Activated T-helper 1 cell treated with anti-CD3 and anti-CD28 coated beads, Interleukin-12 subunit alpha, Interleukin-12 subunit beta, Interleukin-2, Interleukin-4 antibody, amounts not matched to agents 30 ng/mL and 10 ng/mL and 1 ng/mL, durations not matched to agents 14 hours and 24 hours and 36 hours (primary cell): ENCODE measurements at regions of chr6 and their contacts with region 1.

Region 1: DNA sequence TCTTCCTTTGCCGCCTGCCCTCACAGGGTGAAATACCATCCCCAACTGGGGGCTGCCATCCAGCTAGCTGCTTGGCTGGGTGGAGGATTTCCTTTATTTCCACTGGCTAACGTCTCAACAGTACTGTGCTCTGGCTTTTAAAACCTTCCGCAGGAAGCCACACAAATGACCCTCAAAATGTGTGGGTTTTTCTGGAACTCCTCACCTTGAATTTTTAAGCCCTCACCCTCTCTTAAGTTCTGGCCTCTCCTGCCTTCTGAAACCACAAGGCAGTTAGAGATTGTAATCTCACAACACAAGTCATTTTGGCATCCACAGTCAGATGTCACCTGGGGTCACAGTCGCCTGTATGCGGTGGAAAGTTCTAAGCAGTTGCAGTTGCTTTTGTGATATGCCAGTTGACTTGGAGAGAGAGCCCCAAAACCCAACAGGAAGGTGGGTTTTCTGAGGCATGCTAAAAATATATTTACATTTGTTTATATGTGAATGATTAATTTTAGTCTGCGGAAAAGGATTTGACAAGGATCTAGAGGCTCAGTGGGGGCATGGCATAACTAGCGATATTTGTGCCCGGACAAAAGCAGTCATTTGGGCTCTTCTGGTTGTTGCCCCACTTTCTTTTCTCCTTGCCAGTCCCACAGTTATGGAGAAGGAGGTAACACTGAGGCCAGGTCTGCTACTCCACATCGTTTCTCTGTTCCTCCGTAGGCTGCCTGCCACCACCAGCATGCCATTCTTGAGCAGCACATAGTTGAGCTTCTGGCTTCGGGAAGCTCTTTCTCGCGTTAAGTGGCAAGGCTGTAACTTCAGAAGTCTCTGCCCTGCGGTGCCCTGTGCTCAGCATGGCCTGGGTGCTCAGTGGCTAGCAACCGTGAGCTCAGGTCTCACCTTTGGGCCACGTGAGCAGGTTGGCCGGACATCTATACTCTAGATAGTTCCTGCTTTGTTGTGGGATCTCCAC is 335.3 kb downstream of the CD83 start:
- DNase-seq: peak; percentile 62
- H3K4me3 Mint-ChIP-seq: peak overlapping the region; percentile 58
- H3K27ac Mint-ChIP-seq: peak overlapping the region; percentile 91
- H3K4me1 Mint-ChIP-seq: peaks cover 88% of the 10 kb centered on the region
- H3K27me3 Mint-ChIP-seq: peaks cover 2% of the 10 kb centered on the region

Region 2: GRCh38 chr6:14381829-14382677 is 70.8 kb before region 1 on chr6:
- intact Hi-C with region 1: loop called (anchors 2 kb)
- DNase-seq: peak; percentile 1
- H3K4me3 Mint-ChIP-seq: no peak overlapping the region
- H3K27ac Mint-ChIP-seq: no peak overlapping the region
- H3K4me1 Mint-ChIP-seq: peaks cover 39% of the 10 kb centered on the region
- H3K27me3 Mint-ChIP-seq: peaks cover 2% of the 10 kb centered on the region

Region 3: GRCh38 chr6:14638906-14639761 is 186.3 kb after region 1 on chr6:
- intact Hi-C with region 1: loop called (anchors 10 kb)
- DNase-seq: no peak
- H3K4me3 Mint-ChIP-seq: no peak overlapping the region
- H3K27ac Mint-ChIP-seq: no peak overlapping the region
- H3K4me1 Mint-ChIP-seq: peaks cover 70% of the 10 kb centered on the region
- H3K27me3 Mint-ChIP-seq: peaks cover 8% of the 10 kb centered on the region

Region 4: DNA sequence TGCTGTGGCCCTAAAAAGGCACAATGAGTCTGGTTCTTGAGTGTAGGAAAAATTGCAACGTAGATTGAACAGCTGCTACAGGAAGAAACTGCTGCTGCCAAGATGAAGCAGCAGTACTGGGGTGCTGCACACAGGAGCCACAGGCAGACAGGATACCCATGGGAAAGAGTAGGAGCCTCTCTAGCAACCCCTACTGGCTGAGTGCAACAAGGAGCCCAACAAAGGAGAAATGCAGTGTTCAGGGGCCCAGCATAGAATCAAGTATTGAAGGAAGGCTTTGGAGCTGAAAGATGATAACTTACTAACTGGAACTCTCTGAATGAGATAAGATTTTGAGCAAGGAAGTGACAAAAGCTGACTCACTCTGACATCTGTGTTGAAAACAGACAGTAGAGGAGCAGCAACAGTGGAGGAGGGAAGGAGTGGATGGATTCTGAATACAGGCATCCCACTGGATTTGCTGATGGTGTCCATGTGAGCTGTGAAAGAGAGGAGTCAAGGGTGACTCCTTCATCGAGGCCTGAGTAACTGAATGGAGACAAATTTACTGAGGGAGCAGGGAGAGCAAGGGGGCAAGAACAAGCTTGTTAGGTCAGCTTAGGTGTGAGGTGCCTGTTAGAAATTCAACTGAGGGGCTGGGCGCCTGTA is 258.3 kb after region 1 on chr6:
- intact Hi-C with region 1: loop called (anchors 5 kb)
- DNase-seq: peak; percentile 56
- H3K4me3 Mint-ChIP-seq: peak overlapping the region; percentile 19
- H3K27ac Mint-ChIP-seq: peak overlapping the region; percentile 92
- H3K4me1 Mint-ChIP-seq: peaks cover 36% of the 10 kb centered on the region
- H3K27me3 Mint-ChIP-seq: peaks cover 4% of the 10 kb centered on the region

Region 5: GRCh38 chr6:15299430-15300131 is 846.7 kb after region 1 on chr6:
- intact Hi-C with region 1: loop called (anchors 2 kb)
- DNase-seq: no peak
- H3K4me3 Mint-ChIP-seq: peak overlapping the region; percentile 69
- H3K27ac Mint-ChIP-seq: peak overlapping the region; percentile 69
- H3K4me1 Mint-ChIP-seq: peaks cover 82% of the 10 kb centered on the region
- H3K27me3 Mint-ChIP-seq: no peaks in the 10 kb centered on the region